Mammary epithelial cell (primary cell): ENCODE measurements at regions of chr4 and their contacts with region 1.

Region 1: GRCh38 chr4:21819086-21819485 is 129.5 kb downstream of the KCNIP4 start:
- DNase-seq: no peak
- H3K4me3 ChIP-seq: no peak overlapping the region
- H3K27ac ChIP-seq: no peak overlapping the region
- H3K4me1 ChIP-seq: no peaks in the 10 kb centered on the region
- H3K27me3 ChIP-seq: no peaks in the 10 kb centered on the region
- CTCF ChIP-seq: no peak

Region 2: GRCh38 chr4:21869978-21870745 is 51.1 kb after region 1 on chr4:
- CTCF ChIA-PET with region 1: no interaction called
- dilution Hi-C with region 1: no loop called
- in situ Hi-C with region 1: no loop called
- intact Hi-C with region 1: loop called (anchors 2 kb)
- DNase-seq: peak; percentile 50
- H3K4me3 ChIP-seq: no peak overlapping the region
- H3K27ac ChIP-seq: no peak overlapping the region
- H3K4me1 ChIP-seq: no peaks in the 10 kb centered on the region
- H3K27me3 ChIP-seq: no peaks in the 10 kb centered on the region
- CTCF ChIP-seq: no peak

Region 3: DNA sequence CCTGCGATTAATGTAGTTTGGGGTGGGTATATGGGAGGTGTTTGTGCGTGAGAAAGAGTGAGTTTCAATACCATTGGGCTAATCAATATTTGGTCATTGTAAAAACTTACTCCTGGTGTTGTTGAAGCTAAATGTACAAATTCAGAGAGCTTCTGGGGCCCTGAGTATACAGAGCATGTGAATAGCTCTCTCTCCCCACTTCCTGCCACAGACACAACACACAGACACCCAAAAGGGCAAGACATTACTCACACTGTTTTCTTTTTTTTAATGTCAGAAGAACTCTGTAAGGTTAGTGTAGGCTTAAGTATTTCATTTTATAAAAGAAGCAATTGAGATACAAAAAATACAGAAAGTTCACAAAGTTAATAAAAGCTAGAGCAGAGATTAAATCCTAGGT is 280.8 kb after region 1 on chr4:
- CTCF ChIA-PET with region 1: no interaction called
- dilution Hi-C with region 1: no loop called
- in situ Hi-C with region 1: loop called in 1 of 2 experiments (anchors 25 kb)
- intact Hi-C with region 1: no loop called
- DNase-seq: peak; percentile 55
- H3K4me3 ChIP-seq: no peak overlapping the region
- H3K27ac ChIP-seq: no peak overlapping the region
- H3K4me1 ChIP-seq: peaks cover 7% of the 10 kb centered on the region
- H3K27me3 ChIP-seq: no peaks in the 10 kb centered on the region
- CTCF ChIP-seq: no peak

Region 4: DNA sequence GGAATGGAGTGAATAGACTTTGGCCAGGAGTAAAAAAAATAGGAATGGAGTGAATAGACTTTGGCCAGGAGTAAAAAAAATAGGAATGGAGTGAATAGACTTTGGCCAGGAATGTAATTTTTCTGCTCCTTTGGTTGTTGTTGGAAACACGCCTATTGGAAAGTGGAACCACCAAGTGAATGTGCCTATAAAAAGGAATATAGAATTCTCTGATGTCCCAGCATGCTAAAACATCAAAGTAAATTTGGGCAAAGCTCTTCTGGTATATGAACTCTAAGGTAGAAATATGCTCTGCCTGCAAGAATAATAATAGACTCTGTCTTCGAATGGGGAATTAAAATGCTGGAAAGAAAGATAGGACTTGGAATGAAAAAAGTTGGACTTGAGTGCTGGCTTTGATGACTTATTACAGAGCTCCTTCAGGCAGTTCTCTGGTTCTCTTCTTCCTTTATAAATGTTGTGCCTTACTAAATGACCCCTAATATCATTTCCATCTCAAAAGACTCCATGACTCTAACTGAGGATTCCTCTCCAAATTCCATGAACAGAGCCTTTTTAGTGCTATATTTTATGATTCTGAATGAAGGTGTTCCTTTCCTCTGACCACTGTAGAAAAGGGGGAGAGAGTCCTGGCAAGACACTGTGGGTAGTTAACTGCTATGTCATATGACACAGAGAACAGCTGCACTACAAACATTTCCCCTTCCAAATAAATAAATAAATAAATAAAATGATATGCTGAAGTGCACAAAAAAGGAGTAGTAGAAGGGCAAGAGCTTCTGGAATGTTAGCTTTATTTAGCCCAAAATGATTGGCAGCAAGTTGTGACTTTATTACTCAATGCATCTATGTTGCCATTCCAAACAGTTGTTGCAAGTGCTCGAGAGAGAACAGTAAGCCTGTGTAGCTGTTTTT is 860.1 kb after region 1 on chr4:
- CTCF ChIA-PET with region 1: no interaction called
- dilution Hi-C with region 1: no loop called
- in situ Hi-C with region 1: loop called in 1 of 2 experiments (anchors 25 kb)
- intact Hi-C with region 1: no loop called
- DNase-seq: no peak
- H3K4me3 ChIP-seq: no peak overlapping the region
- H3K27ac ChIP-seq: no peak overlapping the region
- H3K4me1 ChIP-seq: no peaks in the 10 kb centered on the region
- H3K27me3 ChIP-seq: no peaks in the 10 kb centered on the region
- CTCF ChIP-seq: no peak